GM12878 (cell line): ENCODE measurements at regions of chr2 and their contacts with region 1.

Region 1: DNA sequence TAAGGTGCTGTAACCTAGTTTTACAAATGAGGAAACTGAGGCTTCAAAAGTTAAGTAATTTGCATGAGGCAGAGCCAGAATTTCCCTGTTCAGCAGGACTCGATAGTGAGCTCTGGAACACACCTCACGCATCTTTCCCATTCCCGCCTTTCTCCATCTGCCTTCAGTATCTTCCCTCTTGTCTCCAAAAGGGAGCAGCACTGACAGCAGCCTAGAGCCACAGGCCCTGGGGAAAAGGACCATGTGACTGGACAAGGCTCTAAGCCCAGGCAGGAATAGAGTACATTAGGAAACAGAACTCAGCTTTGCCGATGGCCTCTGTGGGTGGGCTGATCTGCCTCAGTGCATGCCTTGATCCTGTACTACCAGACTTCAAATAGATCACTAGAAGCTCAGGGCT is 21.5 kb downstream of the GPR155 start:
- DNase-seq: no peak
- ATAC-seq: no peak
- H3K4me3 ChIP-seq: no peak overlapping the region
- H3K27ac ChIP-seq: no peak overlapping the region
- H3K4me1 ChIP-seq: no peaks in the 10 kb centered on the region
- H3K27me3 ChIP-seq: no peaks in the 10 kb centered on the region
- CTCF ChIP-seq: no peak
- EP300 ChIP-seq: no peak
- POLR2A ChIP-seq: no peak
- RAD21 ChIP-seq: no peak

Region 2: GRCh38 chr2:174487108-174487819 is 21.9 kb after region 1 on chr2:
- CTCF ChIA-PET with region 1: interaction called, 49 read pairs
- POLR2A ChIA-PET with region 1: interaction called, 3 read pairs
- RAD21 ChIA-PET with region 1: interaction called, 17 read pairs
- SMC1A ChIA-PET with region 1: interaction called, 46 read pairs
- in situ Hi-C with region 1: no loop called
- intact Hi-C with region 1: no loop called
- DNase-seq: peak; percentile 85
- ATAC-seq: peak; percentile 96
- H3K4me3 ChIP-seq: peak overlapping the region; percentile 81
- H3K27ac ChIP-seq: peak overlapping the region; percentile 85
- H3K4me1 ChIP-seq: peaks cover 9% of the 10 kb centered on the region
- H3K27me3 ChIP-seq: no peaks in the 10 kb centered on the region
- CTCF ChIP-seq: no peak
- EP300 ChIP-seq: no peak
- POLR2A ChIP-seq: peak; percentile 55
- RAD21 ChIP-seq: no peak

Region 3: GRCh38 chr2:174522553-174522952 is 57.2 kb after region 1 on chr2:
- CTCF ChIA-PET with region 1: interaction called, 95 read pairs
- POLR2A ChIA-PET with region 1: interaction called, 3 read pairs
- RAD21 ChIA-PET with region 1: interaction called, 42 read pairs
- SMC1A ChIA-PET with region 1: interaction called, 55 read pairs
- in situ Hi-C with region 1: loop called (anchors 5 kb)
- intact Hi-C with region 1: loop called (anchors 1 kb)
- DNase-seq: no peak
- ATAC-seq: no peak
- H3K4me3 ChIP-seq: no peak overlapping the region
- H3K27ac ChIP-seq: no peak overlapping the region
- H3K4me1 ChIP-seq: no peaks in the 10 kb centered on the region
- H3K27me3 ChIP-seq: peaks cover 0 to 2% of the 10 kb centered on the region in 2 experiments; a peak in 1 of 4 replicates
- CTCF ChIP-seq: peak in 1 of 3 experiments; percentile 39; a peak in 2 of 6 replicates
- EP300 ChIP-seq: no peak
- POLR2A ChIP-seq: no peak
- RAD21 ChIP-seq: peak; percentile 54

Region 4: GRCh38 chr2:174553811-174554493 is 88.6 kb after region 1 on chr2:
- CTCF ChIA-PET with region 1: interaction called, 119 read pairs
- POLR2A ChIA-PET with region 1: no interaction called
- RAD21 ChIA-PET with region 1: interaction called, 81 read pairs
- SMC1A ChIA-PET with region 1: interaction called, 17 read pairs
- in situ Hi-C with region 1: no loop called
- intact Hi-C with region 1: no loop called
- DNase-seq: no peak
- ATAC-seq: peak; percentile 83
- H3K4me3 ChIP-seq: no peak overlapping the region
- H3K27ac ChIP-seq: peak overlapping the region; percentile 57
- H3K4me1 ChIP-seq: peaks cover 15% of the 10 kb centered on the region
- H3K27me3 ChIP-seq: no peaks in the 10 kb centered on the region
- CTCF ChIP-seq: no peak
- EP300 ChIP-seq: no peak
- POLR2A ChIP-seq: no peak
- RAD21 ChIP-seq: no peak

Region 5: DNA sequence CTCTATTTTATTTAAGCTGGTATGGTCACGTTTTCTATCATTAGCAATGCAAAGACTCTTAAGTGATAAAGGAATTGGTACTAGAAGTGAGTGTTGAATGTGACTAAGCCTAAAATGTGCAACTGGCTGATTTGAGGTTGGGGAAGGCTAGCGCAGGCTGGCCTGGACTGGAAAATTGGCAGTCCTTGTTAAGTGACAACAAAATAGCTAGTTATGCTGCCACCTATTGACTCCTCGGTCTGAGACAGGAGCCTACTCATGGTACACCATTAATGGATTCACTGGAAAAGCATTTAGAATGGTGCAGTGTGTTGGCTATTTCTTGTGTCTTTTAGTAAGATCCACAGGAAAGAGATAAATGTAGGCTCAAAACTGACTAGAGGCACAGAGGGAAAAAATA is 138.0 kb after region 1 on chr2:
- CTCF ChIA-PET with region 1: interaction called, 84 read pairs
- POLR2A ChIA-PET with region 1: interaction called, 3 read pairs
- RAD21 ChIA-PET with region 1: interaction called, 39 read pairs
- SMC1A ChIA-PET with region 1: interaction called, 48 read pairs
- in situ Hi-C with region 1: no loop called
- intact Hi-C with region 1: loop called (anchors 2 kb)
- DNase-seq: no peak
- ATAC-seq: peak; percentile 48
- H3K4me3 ChIP-seq: no peak overlapping the region
- H3K27ac ChIP-seq: no peak overlapping the region
- H3K4me1 ChIP-seq: peaks cover 44% of the 10 kb centered on the region
- H3K27me3 ChIP-seq: no peaks in the 10 kb centered on the region
- CTCF ChIP-seq: peak; percentile 66 to 76 (median 70)
- EP300 ChIP-seq: no peak
- POLR2A ChIP-seq: no peak
- RAD21 ChIP-seq: peak; percentile 68

Region 6: GRCh38 chr2:174688079-174688478 is 222.8 kb after region 1 on chr2:
- CTCF ChIA-PET with region 1: interaction called, 165 read pairs
- POLR2A ChIA-PET with region 1: interaction called, 6 read pairs
- RAD21 ChIA-PET with region 1: interaction called, 40 read pairs
- SMC1A ChIA-PET with region 1: interaction called, 92 read pairs
- in situ Hi-C with region 1: loop called (anchors 5 kb)
- intact Hi-C with region 1: loop called (anchors 2 kb)
- DNase-seq: no peak
- ATAC-seq: peak; percentile 70
- H3K4me3 ChIP-seq: no peak overlapping the region
- H3K27ac ChIP-seq: no peak overlapping the region
- H3K4me1 ChIP-seq: peaks cover 2% of the 10 kb centered on the region
- H3K27me3 ChIP-seq: peaks cover 0 to 2% of the 10 kb centered on the region in 2 experiments; a peak in 1 of 4 replicates
- CTCF ChIP-seq: peak; percentile 26 to 56 (median 42); a peak in 5 of 6 replicates
- EP300 ChIP-seq: no peak
- POLR2A ChIP-seq: no peak
- RAD21 ChIP-seq: peak; percentile 50; the same call in 1 of the 2 replicates

Region 7: DNA sequence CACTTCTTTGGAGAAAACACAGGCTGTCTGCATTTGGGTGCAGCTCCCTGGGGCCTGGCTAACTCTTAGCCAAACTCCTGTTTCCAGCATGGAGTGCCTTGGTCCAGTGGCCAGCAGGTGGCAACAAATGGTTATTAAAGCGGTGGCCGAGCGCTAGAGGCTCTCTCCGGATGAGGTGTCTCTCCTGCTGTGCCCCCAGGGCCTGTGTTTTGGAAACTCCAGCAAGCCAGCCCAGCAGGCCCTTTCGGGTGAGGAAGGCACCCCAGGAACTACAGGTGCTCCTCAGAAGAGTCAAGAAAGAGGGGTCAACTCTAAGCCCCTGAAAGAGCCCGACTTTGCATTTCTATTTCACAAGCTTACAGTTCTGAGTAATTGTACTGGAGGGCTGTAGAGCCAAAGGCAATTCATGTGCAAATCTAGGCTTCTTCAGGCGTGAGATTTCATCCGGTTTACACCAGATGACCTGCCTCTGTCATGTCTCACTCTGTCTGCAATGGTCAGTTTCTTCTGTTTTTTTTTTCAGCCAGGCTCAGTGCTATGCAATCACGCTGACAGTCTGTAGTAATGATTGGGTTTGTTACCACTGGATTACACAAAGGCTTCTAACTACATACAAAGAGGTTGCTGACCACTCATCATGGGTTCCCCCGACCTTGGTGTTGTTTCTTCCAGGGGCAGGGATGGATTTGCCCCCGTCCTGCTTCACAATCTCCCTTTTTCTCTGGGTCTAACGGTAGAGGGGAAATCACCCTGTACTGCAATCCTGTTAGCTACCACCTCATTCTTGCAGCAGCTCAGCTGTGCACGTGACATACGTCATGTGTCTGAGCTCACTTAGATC is 306.5 kb after region 1 on chr2:
- CTCF ChIA-PET with region 1: no interaction called
- POLR2A ChIA-PET with region 1: no interaction called
- RAD21 ChIA-PET with region 1: no interaction called
- SMC1A ChIA-PET with region 1: no interaction called
- in situ Hi-C with region 1: no loop called
- intact Hi-C with region 1: no loop called
- DNase-seq: no peak
- ATAC-seq: peak; percentile 97
- H3K4me3 ChIP-seq: no peak overlapping the region
- H3K27ac ChIP-seq: no peak overlapping the region
- H3K4me1 ChIP-seq: no peaks in the 10 kb centered on the region
- H3K27me3 ChIP-seq: peaks cover 0 to 1% of the 10 kb centered on the region in 2 experiments; a peak in 1 of 4 replicates
- CTCF ChIP-seq: peak; percentile 50 to 72 (median 70)
- EP300 ChIP-seq: no peak
- POLR2A ChIP-seq: no peak
- RAD21 ChIP-seq: peak; percentile 67